ENCODE measurements at regions of chr6 and their contacts with region 1.

Region 1: GRCh38 chr6:97437087-97437486 is 154.1 kb upstream of the MMS22L start:
- DNase-seq: peak; percentile 31
- ATAC-seq: peak; percentile 77
- H3K4me3 ChIP-seq: no peak overlapping the region
- H3K27ac ChIP-seq: no peak overlapping the region
- H3K4me1 ChIP-seq: no peaks in the 10 kb centered on the region
- H3K27me3 ChIP-seq: no peaks in the 10 kb centered on the region
- CTCF ChIP-seq: peak; percentile 49
- EP300 ChIP-seq: no peak
- POLR2A ChIP-seq: no peak
- RAD21 ChIP-seq: no peak

Region 2: DNA sequence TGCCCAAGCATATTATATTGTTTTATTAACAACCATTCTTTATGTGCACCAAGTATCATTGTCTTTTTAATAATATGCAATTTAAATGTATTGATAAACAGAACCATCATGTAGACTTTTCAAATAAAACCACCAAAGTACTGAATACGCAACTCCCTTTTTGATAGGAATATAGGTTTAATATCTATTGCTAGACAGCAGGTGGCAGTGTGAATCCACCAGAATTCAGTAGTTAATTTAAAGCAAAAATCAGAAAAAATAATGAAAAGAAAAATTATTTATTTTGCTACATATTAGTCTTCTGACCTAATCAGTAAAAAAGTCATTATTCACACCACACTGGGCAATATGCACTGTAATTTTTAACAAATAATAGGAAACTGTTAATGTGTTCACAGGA is 368.9 kb before region 1 on chr6:
- CTCF ChIA-PET with region 1: no interaction called
- POLR2A ChIA-PET with region 1: no interaction called
- in situ Hi-C with region 1: no loop called
- intact Hi-C with region 1: loop called (anchors 2 kb)
- DNase-seq: peak; percentile 3
- ATAC-seq: no peak
- H3K4me3 ChIP-seq: no peak overlapping the region
- H3K27ac ChIP-seq: no peak overlapping the region
- H3K4me1 ChIP-seq: no peaks in the 10 kb centered on the region
- H3K27me3 ChIP-seq: no peaks in the 10 kb centered on the region
- CTCF ChIP-seq: peak; percentile 39
- EP300 ChIP-seq: no peak
- POLR2A ChIP-seq: no peak
- RAD21 ChIP-seq: no peak

Region 3: DNA sequence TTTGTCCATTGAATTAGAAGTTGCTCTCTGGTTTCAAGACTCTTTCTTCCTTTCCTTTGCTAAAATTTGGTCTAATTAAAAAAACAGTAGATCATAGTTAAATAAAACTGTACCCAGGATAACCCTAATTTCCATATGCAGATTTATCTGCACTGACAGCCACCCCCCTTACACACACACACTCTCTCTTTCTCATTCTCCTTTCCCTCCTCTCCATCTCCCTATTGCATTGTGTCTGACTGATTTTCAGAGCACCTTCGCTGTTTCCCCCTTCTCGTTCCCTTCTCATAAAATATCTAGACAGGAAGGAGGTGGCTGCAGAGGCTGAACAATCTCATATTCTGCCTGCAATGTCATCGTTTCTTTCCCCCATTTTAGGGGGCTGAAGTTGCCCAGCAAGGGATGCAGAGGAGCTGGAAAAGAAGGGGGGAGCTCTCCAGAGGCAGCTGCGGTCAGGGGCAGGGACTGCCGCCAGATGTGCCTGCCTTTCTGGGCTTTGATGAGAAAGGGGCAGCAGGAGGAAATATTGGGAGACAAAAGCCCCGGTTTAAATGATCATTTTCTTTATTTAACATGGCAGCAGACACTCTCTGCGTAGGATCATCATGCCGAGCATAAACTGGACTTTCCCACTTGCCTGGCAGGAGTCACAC is 131.5 kb before region 1 on chr6:
- CTCF ChIA-PET with region 1: no interaction called
- POLR2A ChIA-PET with region 1: no interaction called
- in situ Hi-C with region 1: no loop called
- intact Hi-C with region 1: no loop called
- DNase-seq: no peak
- ATAC-seq: no peak
- H3K4me3 ChIP-seq: no peak overlapping the region
- H3K27ac ChIP-seq: no peak overlapping the region
- H3K4me1 ChIP-seq: no peaks in the 10 kb centered on the region
- H3K27me3 ChIP-seq: peaks cover 0 to 3% of the 10 kb centered on the region in 2 experiments; a peak in 2 of 5 replicates
- CTCF ChIP-seq: no peak
- EP300 ChIP-seq: no peak
- POLR2A ChIP-seq: no peak
- RAD21 ChIP-seq: no peak